ENCODE measurements at regions of chr6 and their contacts with region 1.

Region 1: DNA sequence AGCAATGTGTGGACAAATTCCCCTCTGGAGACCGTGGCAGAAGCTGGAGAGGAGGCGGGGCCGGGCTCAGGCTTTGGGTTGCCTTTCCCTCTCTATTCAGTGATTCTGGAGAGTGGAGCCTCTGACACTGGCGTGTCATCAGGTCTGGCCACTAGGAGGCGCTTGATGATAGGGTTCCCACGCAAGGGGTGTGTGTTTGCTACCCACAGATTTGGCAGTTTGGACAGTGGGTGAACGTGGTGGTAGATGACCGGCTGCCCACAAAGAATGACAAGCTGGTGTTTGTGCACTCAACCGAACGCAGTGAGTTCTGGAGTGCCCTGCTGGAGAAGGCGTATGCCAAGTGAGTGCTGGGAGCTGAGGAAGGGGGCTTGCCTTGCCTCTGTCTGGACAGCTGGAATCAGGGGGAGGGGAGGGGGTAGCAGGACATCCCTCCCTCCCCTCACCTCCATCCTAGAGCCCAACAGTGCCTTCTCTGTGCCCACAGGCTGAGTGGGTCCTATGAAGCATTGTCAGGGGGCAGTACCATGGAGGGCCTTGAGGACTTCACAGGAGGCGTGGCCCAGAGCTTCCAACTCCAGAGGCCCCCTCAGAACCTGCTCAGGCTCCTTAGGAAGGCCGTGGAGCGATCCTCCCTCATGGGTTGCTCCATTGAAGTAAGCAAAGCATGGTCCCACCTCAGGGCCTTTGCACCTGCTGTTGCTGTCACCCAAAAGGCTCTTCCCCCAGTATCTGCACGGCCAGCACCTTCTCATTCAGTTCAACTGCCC is 14.3 kb downstream of the CAPN11 start:
- DNase-seq: peak; percentile 88
- H3K4me3 ChIP-seq: no peak overlapping the region
- H3K27ac ChIP-seq: no peak overlapping the region
- H3K4me1 ChIP-seq: peaks cover 0 to 4% of the 10 kb centered on the region in 2 experiments; a peak in 1 of 4 replicates
- H3K27me3 ChIP-seq: no peaks in the 10 kb centered on the region
- CTCF ChIP-seq: peak; percentile 90
- EP300 ChIP-seq: no peak
- RAD21 ChIP-seq: peak; percentile 95

Region 2: GRCh38 chr6:43990627-43991619 is 182.0 kb before region 1 on chr6:
- CTCF ChIA-PET with region 1: no interaction called
- POLR2A ChIA-PET with region 1: no interaction called
- DNase-seq: peak; percentile 83
- H3K4me3 ChIP-seq: no peak overlapping the region
- H3K27ac ChIP-seq: peak overlapping the region in 1 of 2 experiments; percentile 98; a peak in 3 of 4 replicates
- H3K4me1 ChIP-seq: peaks cover 17 to 68% of the 10 kb centered on the region in 2 experiments; a peak in 2 of 4 replicates
- H3K27me3 ChIP-seq: no peaks in the 10 kb centered on the region
- CTCF ChIP-seq: no peak
- EP300 ChIP-seq: peak in 1 of 2 experiments; percentile 59; a peak in 2 of 4 replicates
- RAD21 ChIP-seq: peak; percentile 22; the same call in 1 of the 2 replicates

Region 3: GRCh38 chr6:44074439-44075136 is 98.3 kb before region 1 on chr6:
- CTCF ChIA-PET with region 1: no interaction called
- POLR2A ChIA-PET with region 1: no interaction called
- DNase-seq: peak; percentile 83
- H3K4me3 ChIP-seq: peak overlapping the region in 1 of 2 experiments; percentile 16; a peak in 1 of 4 replicates
- H3K27ac ChIP-seq: peak overlapping the region in 1 of 2 experiments; percentile 99; a peak in 2 of 4 replicates
- H3K4me1 ChIP-seq: peaks cover 35 to 70% of the 10 kb centered on the region in 2 experiments
- H3K27me3 ChIP-seq: no peaks in the 10 kb centered on the region
- CTCF ChIP-seq: peak; percentile 91
- EP300 ChIP-seq: peak in 1 of 2 experiments; percentile 8; a peak in 1 of 4 replicates
- RAD21 ChIP-seq: peak; percentile 88

Region 4: GRCh38 chr6:44151348-44152108 is 21.4 kb before region 1 on chr6:
- CTCF ChIA-PET with region 1: interaction called, 33 read pairs
- POLR2A ChIA-PET with region 1: no interaction called
- DNase-seq: peak; percentile 93
- H3K4me3 ChIP-seq: peak overlapping the region in 1 of 2 experiments; percentile 49; a peak in 1 of 4 replicates
- H3K27ac ChIP-seq: no peak overlapping the region
- H3K4me1 ChIP-seq: peaks cover 0 to 3% of the 10 kb centered on the region in 2 experiments; a peak in 1 of 4 replicates
- H3K27me3 ChIP-seq: no peaks in the 10 kb centered on the region
- CTCF ChIP-seq: peak; percentile 97
- EP300 ChIP-seq: no peak
- RAD21 ChIP-seq: peak; percentile 67

Region 5: DNA sequence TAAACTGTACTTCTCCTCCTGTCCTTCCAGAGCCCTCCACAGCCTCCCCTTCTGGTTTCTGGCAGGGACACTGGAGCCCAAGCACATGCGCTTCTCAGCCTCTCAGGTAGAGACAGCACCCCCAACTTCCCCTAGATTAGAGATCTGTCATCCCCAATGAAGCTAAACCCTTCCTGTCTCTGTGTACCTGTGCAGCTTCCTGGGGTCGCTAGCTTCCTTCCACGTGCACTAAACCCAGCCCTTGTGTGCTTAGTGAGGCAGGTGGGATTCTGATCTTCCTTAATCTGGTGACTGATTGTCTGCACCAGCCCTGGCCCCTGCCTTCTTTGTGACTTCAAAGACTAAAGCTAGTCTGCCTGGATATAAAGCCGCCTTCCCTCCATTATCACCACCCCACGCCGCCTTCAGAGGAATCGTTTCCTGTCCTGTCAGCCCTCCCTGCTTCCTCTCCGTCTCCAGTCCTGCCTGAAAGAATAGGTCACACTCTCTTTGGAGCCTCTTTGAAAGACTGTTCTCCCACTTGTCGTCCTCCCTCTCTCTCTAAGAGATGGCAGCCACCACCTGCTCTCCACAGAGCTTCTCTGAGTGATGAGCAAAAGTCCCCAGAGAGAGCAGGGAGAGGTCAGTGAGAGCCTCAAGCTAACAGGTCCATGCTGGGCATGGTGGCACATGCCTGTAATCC is 13.2 kb after region 1 on chr6:
- CTCF ChIA-PET with region 1: interaction called, 31 read pairs
- POLR2A ChIA-PET with region 1: no interaction called
- DNase-seq: no peak
- H3K4me3 ChIP-seq: no peak overlapping the region
- H3K27ac ChIP-seq: no peak overlapping the region
- H3K4me1 ChIP-seq: no peaks in the 10 kb centered on the region
- H3K27me3 ChIP-seq: no peaks in the 10 kb centered on the region; the same call in 1 of the 2 replicates
- CTCF ChIP-seq: no peak
- EP300 ChIP-seq: no peak
- RAD21 ChIP-seq: no peak

Region 6: GRCh38 chr6:44211284-44211683 is 38.4 kb after region 1 on chr6:
- CTCF ChIA-PET with region 1: interaction called, 10 read pairs
- POLR2A ChIA-PET with region 1: no interaction called
- DNase-seq: no peak
- H3K4me3 ChIP-seq: no peak overlapping the region
- H3K27ac ChIP-seq: no peak overlapping the region
- H3K4me1 ChIP-seq: no peaks in the 10 kb centered on the region
- H3K27me3 ChIP-seq: no peaks in the 10 kb centered on the region
- CTCF ChIP-seq: no peak
- EP300 ChIP-seq: no peak
- RAD21 ChIP-seq: no peak

Region 7: DNA sequence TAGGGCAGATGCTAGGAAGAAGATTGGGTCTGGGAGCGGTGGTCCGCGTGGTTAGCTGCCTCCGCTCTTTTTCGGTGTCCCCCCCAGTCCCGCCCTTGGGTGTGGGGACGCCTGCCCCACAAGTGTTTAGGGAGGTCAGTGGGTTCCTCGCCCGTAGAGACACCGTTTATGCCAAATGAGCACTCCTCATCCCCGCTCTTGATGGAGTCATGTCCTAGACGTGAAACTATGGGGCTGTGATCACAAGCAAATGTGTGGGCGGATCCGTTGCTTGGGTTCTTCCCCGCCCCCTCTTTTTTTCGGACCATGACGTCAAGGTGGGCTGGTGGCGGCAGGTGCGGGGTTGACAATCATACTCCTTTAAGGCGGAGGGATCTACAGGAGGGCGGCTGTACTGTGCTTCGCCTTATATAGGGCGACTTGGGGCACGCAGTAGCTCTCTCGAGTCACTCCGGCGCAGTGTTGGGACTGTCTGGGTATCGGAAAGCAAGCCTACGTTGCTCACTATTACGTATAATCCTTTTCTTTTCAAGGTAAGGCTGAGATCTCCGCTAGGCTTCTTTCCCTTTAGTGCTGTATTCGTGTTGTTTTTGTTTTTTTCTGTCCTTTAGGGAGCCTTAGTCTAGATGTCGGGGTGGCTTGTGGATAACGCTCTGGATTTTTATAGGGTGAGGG is 73.9 kb after region 1 on chr6 and contains the start of gene HSP90AB1:
- CTCF ChIA-PET with region 1: interaction called, 62 read pairs
- POLR2A ChIA-PET with region 1: interaction called, 7 read pairs
- DNase-seq: peak; percentile 94
- H3K4me3 ChIP-seq: peak within 1 kb of the TSS; percentile 65 to 99
- H3K27ac ChIP-seq: peak within 1 kb of the TSS; percentile 86
- H3K4me1 ChIP-seq: peaks cover 13 to 24% of the 10 kb centered on the region in 2 experiments; a peak in 3 of 4 replicates
- H3K27me3 ChIP-seq: no peaks in the 10 kb centered on the region
- CTCF ChIP-seq: no peak
- EP300 ChIP-seq: peak in 1 of 2 experiments; percentile 50; a peak in 1 of 4 replicates
- RAD21 ChIP-seq: no peak
- polyA plus RNA-seq, gene HSP90AB1: 843 and 1,069 TPM in 2 replicates

Region 8: GRCh38 chr6:44275749-44276648 is 103.1 kb after region 1 on chr6:
- CTCF ChIA-PET with region 1: no interaction called
- POLR2A ChIA-PET with region 1: no interaction called
- DNase-seq: peak; percentile 22
- H3K4me3 ChIP-seq: no peak overlapping the region
- H3K27ac ChIP-seq: no peak overlapping the region
- H3K4me1 ChIP-seq: peaks cover 0 to 12% of the 10 kb centered on the region in 2 experiments; a peak in 1 of 4 replicates
- H3K27me3 ChIP-seq: 0 out of 2 replicates have a peak, but pooled peaks cover 15% of the 10 kb centered on the region
- CTCF ChIP-seq: no peak
- EP300 ChIP-seq: no peak
- RAD21 ChIP-seq: no peak

Region 9: DNA sequence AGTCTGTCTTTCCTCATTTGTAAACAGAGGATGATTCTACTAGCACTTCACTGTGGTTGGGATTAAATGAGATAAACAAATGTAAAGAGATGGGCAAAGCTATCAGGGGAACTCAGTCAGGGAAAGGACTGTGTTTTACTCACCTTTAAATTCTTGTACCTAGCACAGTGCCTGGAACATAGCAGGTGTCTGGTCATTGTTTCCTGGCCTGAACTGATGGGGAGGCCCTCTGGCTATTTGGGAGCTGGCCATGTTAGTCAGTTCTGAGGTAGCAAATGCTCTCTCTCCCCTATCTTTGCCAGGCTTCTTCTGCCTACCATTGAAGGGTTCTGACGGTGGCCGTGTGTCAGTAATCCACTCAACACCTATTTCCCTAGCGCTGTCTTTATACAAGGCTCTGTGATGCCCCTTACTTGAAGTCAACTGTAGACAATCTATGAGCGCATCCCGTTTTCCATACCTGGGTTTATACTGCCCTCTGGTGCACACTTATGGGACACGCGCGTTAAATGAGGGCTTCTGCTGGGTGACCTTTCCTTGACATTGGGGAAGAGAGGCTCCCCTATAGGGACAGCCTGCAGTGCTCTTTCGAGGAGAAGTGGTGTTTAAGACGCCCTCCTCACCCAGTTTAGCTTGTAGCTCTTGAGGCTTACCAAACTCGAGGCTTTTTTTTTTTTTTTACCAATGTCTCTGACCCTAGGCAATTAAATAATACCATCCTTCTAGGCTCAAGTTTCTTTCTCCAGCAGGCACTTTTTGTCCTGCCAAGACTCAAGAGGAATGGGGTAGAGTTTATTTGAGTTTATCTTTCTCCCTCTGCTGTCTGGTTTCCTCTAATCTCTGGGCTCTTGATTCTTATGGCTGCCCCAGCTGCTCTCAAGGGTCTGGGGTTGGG is 165.6 kb after region 1 on chr6:
- CTCF ChIA-PET with region 1: interaction called, 11 read pairs
- POLR2A ChIA-PET with region 1: no interaction called
- DNase-seq: peak; percentile 71
- H3K4me3 ChIP-seq: no peak overlapping the region; a peak in 1 of 4 replicates
- H3K27ac ChIP-seq: no peak overlapping the region
- H3K4me1 ChIP-seq: peaks cover 0 to 22% of the 10 kb centered on the region in 2 experiments; a peak in 2 of 4 replicates
- H3K27me3 ChIP-seq: peaks cover 36% of the 10 kb centered on the region
- CTCF ChIP-seq: peak; percentile 84
- EP300 ChIP-seq: no peak
- RAD21 ChIP-seq: peak; percentile 92

Region 10: DNA sequence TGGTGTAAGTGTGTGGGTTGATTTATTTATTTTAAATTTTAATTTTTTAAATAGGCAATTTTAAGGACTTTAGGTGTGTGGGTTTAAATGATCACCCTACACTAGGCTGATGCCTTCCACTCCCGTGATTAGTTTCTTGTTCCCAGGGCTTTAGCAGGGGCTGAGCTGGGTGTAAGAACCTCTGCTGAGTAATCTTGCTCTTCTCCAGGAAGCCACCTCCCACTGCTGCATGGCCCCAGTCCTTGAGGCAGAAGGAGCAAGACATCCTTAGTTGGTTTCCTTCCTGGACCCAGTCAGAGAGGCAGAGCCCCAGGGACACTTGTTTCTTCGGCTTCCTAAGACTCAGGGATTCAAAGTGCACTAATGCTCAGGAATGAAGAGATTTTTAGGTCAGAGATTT is 194.8 kb after region 1 on chr6:
- CTCF ChIA-PET with region 1: no interaction called
- POLR2A ChIA-PET with region 1: no interaction called
- DNase-seq: no peak
- H3K4me3 ChIP-seq: no peak overlapping the region
- H3K27ac ChIP-seq: no peak overlapping the region
- H3K4me1 ChIP-seq: no peaks in the 10 kb centered on the region
- H3K27me3 ChIP-seq: peaks cover 7% of the 10 kb centered on the region; the same call in 1 of the 2 replicates
- CTCF ChIP-seq: no peak
- EP300 ChIP-seq: no peak
- RAD21 ChIP-seq: no peak

Measured in SK-N-SH (cell line).